ENCODE measurements at regions of chr12 and their contacts with region 1.

Region 1: DNA sequence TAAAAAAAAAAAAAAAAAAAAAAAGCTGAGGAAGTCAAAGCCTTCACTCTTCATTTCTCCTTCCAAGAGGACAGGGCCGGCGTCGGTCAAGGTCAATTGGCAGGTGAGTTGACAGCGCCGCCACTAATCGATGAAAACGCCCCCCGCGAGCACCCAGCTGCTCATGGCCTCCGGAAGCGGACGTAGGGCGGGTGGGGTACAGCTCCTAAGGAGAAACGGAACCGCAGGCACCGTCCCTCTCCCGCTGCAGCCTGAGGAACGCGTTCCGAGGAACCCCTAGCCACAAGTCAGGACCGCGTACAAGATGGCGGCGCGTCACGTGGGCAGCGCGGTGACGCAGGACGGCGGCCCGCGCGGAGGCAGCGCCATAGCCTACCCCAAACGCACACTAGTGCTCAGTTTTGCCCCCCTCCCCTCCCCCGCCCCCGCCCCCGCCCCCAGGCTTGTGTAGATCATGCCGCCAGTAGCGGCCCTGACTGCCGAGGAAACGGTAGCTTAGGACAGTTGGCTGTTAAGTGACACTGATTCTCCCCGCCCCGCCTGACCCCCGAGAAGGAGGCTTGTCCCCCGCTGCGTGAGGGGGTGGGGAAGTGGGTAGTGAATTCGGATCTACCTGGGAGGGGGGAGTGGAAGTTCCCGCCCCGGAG is at the start of gene ATF1:
- DNase-seq: peak; percentile 94
- H3K4me3 Mint-ChIP-seq: peak within 1 kb of the TSS; percentile 82
- H3K27ac Mint-ChIP-seq: peak within 1 kb of the TSS; percentile 87
- H3K4me1 Mint-ChIP-seq: peaks cover 34% of the 10 kb centered on the region
- H3K27me3 Mint-ChIP-seq: no peaks in the 10 kb centered on the region
- total RNA-seq, gene ATF1: 50.1 to 50.5 TPM

Region 2: GRCh38 chr12:50351120-50352043 is 412.4 kb before region 1 on chr12:
- CTCF ChIA-PET with region 1: no interaction called
- POLR2A ChIA-PET with region 1: no interaction called
- intact Hi-C with region 1: no loop called
- DNase-seq: no peak
- H3K4me3 Mint-ChIP-seq: no peak overlapping the region
- H3K27ac Mint-ChIP-seq: no peak overlapping the region
- H3K4me1 Mint-ChIP-seq: no peaks in the 10 kb centered on the region
- H3K27me3 Mint-ChIP-seq: no peaks in the 10 kb centered on the region

Region 3: DNA sequence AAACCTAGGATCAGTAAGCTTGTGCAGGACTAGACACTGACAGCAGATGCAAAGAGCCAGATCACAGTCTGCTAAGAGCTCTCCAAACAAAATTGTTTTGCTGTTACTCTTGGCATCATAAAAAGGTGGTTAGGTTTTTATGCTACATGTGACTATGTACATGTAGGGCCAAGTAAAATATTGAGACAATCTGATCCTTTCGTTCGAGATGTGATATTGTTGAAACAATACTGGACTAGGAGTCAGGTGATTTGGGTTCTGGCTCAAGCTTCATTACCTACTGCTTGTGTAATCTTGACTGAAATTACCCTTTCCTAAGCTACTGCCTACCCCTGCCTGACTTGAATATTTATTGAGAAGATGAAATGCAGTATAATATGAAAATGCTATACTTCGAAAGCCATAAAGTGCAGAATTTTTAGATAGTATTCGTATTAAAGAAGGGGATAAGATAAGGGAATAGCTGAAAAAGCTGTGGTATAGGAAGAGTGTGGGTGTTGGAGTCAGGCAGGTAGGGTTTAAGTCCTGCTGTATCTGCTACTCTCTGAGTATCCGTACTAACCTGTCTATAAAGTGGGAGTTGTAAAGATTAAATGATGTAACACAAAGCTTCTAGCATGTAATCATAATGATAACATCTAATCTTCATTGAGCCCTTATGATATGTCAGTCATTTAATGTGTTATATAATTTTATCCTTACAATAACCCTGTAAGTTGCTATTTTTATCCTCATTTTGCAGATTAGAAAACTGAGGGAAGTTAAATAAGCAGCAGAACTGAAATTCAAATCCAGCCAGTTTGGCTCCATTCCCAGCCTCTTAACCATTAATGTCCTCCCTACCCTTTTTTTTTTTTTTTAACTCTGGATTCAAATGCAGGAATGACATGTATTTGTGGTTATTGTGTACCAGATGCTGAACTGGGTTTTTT is 38.5 kb before region 1 on chr12:
- CTCF ChIA-PET with region 1: no interaction called
- POLR2A ChIA-PET with region 1: no interaction called
- intact Hi-C with region 1: no loop called
- DNase-seq: no peak
- H3K4me3 Mint-ChIP-seq: no peak overlapping the region
- H3K27ac Mint-ChIP-seq: no peak overlapping the region
- H3K4me1 Mint-ChIP-seq: no peaks in the 10 kb centered on the region
- H3K27me3 Mint-ChIP-seq: no peaks in the 10 kb centered on the region

Region 4: DNA sequence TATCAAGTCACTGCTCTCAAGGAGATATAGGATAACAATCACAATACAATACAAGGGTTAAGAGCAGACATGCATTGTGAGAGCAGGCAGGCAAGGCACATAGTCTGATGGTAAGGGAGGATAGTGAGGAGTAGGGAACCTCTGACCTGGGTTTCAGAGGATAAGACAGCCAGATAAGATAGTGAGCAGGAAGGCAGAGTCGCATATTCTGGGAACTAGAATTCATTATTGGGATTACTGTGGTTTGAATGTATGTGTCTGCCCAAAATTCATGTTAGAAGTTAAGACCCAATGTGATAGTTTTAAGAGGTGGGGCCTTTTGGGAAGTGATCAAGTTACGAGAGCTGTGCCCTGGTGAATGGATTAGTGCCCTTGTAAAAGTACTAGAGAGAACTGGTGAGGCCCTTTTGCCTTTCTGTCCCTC is 14.3 kb before region 1 on chr12:
- CTCF ChIA-PET with region 1: no interaction called
- POLR2A ChIA-PET with region 1: no interaction called
- intact Hi-C with region 1: no loop called
- DNase-seq: no peak
- H3K4me3 Mint-ChIP-seq: no peak overlapping the region
- H3K27ac Mint-ChIP-seq: no peak overlapping the region
- H3K4me1 Mint-ChIP-seq: no peaks in the 10 kb centered on the region
- H3K27me3 Mint-ChIP-seq: no peaks in the 10 kb centered on the region

Region 5: DNA sequence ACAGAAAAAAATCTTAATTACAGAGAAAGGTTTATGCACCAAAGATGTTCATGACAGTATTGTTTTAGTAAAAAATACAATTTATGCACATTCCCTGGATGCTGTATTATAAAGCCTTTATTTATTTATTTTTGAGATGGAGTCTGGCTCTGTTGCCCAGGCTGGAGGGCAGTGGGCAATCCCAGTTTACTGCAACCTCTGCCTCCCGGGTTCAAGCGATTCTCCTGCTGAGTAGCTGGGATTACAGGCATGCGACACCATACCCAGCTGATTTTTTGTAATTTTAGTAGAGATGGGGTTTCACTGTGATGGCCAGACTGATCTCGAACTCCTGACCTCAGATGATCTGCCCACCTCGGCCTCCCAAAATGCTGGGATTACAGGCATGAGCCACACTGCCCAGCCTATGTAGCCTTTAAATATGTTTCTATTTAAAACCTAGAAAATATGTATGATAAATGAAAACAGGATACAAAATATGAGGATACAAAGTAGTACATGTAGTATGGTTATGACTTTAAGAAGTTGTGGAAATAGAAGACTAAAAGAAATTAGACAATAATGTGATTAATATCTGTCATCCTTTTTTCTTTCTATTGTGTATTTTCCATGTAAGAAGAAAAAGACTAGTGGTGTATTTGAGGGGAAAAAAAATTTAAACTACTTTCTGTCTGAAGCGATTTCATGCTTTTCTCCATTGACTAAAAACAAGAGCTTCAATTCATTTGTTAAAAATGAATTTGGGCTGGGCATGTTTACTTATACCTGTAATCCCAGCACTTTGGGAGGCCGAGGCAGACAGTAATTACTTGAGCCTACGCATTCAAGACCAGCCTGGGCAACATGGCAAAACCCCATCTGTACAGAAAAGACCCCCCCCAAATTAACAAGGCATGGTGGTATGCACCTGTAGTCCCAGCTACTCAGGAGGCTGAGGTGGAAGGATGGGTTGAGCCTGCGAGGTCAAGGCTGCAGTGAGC is 13.3 kb after region 1 on chr12:
- CTCF ChIA-PET with region 1: interaction called, 24 read pairs
- POLR2A ChIA-PET with region 1: interaction called, 14 read pairs
- intact Hi-C with region 1: no loop called
- DNase-seq: peak; percentile 35
- H3K4me3 Mint-ChIP-seq: no peak overlapping the region
- H3K27ac Mint-ChIP-seq: peak overlapping the region; percentile 57
- H3K4me1 Mint-ChIP-seq: peaks cover 46% of the 10 kb centered on the region
- H3K27me3 Mint-ChIP-seq: no peaks in the 10 kb centered on the region

Region 6: DNA sequence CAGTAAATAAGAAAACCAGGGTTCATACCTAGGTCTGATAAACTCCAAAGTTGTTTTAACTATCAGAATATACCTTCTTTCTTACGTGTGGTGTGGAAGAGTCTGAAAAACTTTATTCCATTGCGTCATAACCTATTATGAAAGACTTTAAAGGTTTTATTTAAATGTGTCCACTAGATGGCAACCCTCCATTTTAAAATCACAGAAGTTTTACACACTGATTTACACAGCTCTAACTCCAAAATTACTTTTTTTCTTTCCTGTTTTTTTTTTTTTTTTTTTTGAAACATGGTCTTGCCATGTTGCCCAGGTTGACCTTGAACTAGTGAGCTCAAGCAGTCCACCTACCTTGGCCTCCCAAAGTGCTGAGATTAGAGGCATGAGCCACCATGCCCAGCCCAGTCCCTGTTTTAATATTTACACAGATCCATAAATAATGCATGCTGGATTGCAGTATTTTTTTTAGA is 61.6 kb after region 1 on chr12:
- CTCF ChIA-PET with region 1: interaction called, 31 read pairs
- POLR2A ChIA-PET with region 1: no interaction called
- intact Hi-C with region 1: loop called (anchors 1 kb)
- DNase-seq: no peak
- H3K4me3 Mint-ChIP-seq: no peak overlapping the region
- H3K27ac Mint-ChIP-seq: no peak overlapping the region
- H3K4me1 Mint-ChIP-seq: peaks cover 5% of the 10 kb centered on the region
- H3K27me3 Mint-ChIP-seq: no peaks in the 10 kb centered on the region

Region 7: GRCh38 chr12:50979369-50980052 is 215.7 kb after region 1 on chr12:
- CTCF ChIA-PET with region 1: interaction called, 3 read pairs
- POLR2A ChIA-PET with region 1: interaction called, 5 read pairs
- intact Hi-C with region 1: loop called (anchors 2 kb)
- DNase-seq: peak; percentile 72
- H3K4me3 Mint-ChIP-seq: peak overlapping the region; percentile 48
- H3K27ac Mint-ChIP-seq: peak overlapping the region; percentile 89
- H3K4me1 Mint-ChIP-seq: peaks cover 26% of the 10 kb centered on the region
- H3K27me3 Mint-ChIP-seq: no peaks in the 10 kb centered on the region

Region 8: DNA sequence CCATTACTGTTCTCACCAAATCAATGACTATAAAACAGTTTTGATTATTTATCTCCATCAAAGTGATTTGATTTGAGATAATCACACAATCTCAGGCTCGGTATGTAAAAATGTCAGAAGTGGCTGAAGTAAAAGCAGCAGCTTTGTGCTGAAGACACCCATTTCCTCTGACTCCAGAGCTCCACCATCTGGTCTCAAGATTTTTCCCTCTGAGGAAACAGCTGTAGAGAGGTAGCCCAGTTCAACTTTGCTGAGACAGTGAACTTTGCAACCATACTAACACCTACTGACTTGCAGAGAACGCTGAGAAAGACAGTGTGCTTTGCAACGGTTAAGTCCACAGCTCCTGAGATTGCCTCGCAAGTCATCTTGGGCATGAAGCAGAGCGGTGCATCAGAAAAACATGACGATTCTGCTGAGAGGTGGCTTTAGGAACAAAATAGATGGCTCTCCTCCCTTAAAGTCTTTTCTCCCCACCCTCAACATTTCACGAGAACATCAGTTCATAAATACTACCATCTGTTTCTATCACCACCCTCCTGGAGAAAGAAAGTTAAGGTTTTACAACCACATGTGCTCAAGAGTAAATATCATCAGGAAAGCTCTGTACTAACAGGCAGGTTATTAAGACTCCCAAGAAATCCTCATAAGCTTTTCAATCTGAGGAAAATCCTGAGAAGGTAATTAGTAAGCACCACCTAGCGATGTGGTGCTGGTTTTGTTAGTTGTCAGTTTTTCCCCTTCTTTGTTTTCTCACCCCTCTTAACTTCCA is 223.4 kb after region 1 on chr12:
- CTCF ChIA-PET with region 1: interaction called, 30 read pairs
- POLR2A ChIA-PET with region 1: interaction called, 5 read pairs
- intact Hi-C with region 1: no loop called
- DNase-seq: peak; percentile 34
- H3K4me3 Mint-ChIP-seq: no peak overlapping the region
- H3K27ac Mint-ChIP-seq: no peak overlapping the region
- H3K4me1 Mint-ChIP-seq: peaks cover 51% of the 10 kb centered on the region
- H3K27me3 Mint-ChIP-seq: no peaks in the 10 kb centered on the region

Region 9: GRCh38 chr12:51246254-51246853 is 482.6 kb after region 1 on chr12:
- CTCF ChIA-PET with region 1: no interaction called
- POLR2A ChIA-PET with region 1: no interaction called
- intact Hi-C with region 1: loop called (anchors 10 kb)
- DNase-seq: peak; percentile 61
- H3K4me3 Mint-ChIP-seq: peak overlapping the region; percentile 15
- H3K27ac Mint-ChIP-seq: peak overlapping the region; percentile 85
- H3K4me1 Mint-ChIP-seq: peaks cover 46% of the 10 kb centered on the region
- H3K27me3 Mint-ChIP-seq: no peaks in the 10 kb centered on the region

Measured in activated CD4-positive, alpha-beta memory T cell treated with anti-CD3 and anti-CD28 coated beads for 36 hours (primary cell).